ENCODE measurements at regions of chr11 and their contacts with region 1.

Region 1: DNA sequence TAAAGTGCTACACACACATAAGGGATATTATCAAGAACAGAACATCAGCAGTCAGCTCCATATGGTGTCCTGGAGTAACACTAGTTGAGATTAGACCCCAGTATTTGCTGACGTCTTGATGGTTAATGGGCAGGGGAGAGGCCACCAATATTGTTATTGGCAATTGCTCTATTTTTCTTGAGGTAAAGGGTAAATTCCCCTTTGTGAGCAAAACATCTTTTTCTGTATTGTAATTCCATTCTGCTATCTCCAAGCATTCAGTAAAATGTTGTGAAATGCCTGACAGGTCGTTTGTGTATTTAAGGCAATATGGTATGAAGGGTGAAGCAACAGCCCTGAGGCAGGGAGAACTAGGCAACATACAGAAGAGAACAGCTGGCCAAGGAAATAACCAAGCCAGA is 21.9 kb downstream of the PC start:
- DNase-seq: peak in 1 of 2 experiments; percentile 78
- H3K4me3 ChIP-seq: no peak overlapping the region
- H3K27ac ChIP-seq: no peak overlapping the region
- H3K4me1 ChIP-seq: peaks cover 26% of the 10 kb centered on the region
- H3K27me3 ChIP-seq: no peaks in the 10 kb centered on the region
- CTCF ChIP-seq: no peak

Region 2: DNA sequence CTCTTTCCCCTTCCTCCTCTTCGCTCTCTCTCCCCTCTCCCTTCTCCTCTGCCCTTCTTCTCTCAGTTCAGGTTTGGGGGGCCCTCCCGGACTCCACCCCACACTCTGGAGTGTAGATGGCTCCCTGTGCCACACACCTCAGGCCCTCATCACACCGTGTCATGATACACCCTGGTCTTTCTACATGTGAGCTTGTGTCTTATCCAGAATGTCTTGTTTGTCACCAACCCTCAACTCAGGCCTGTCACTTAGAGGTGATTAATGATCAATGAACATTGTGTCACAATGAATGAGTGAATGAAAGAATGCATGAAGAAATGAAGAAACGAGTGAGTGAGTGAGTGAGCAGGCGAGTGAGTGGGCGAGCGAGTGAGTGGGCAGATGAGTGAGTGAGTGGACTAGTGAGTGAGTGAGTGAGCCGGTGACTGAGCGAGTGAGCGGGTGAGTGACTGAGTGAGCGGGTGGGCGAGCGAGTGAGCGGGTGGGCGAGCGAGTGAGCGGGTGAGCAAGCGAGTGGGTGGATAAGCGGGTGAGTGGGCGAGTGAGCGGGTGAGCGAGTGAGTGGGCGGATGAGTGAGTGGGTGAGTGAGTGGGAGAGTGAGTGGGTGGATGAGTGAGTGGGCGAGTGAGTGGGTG is 1720.8 kb before region 1 on chr11:
- CTCF ChIA-PET with region 1: interaction called, 11 read pairs
- POLR2A ChIA-PET with region 1: no interaction called
- intact Hi-C with region 1: no loop called
- DNase-seq: peak in 1 of 2 experiments; percentile 71
- H3K4me3 ChIP-seq: peak overlapping the region; percentile 74
- H3K27ac ChIP-seq: no peak overlapping the region
- H3K4me1 ChIP-seq: peaks cover 45% of the 10 kb centered on the region
- H3K27me3 ChIP-seq: no peaks in the 10 kb centered on the region
- CTCF ChIP-seq: no peak